A549 (cell line): ENCODE measurements at regions of chr17 and their contacts with region 1.

Region 1: DNA sequence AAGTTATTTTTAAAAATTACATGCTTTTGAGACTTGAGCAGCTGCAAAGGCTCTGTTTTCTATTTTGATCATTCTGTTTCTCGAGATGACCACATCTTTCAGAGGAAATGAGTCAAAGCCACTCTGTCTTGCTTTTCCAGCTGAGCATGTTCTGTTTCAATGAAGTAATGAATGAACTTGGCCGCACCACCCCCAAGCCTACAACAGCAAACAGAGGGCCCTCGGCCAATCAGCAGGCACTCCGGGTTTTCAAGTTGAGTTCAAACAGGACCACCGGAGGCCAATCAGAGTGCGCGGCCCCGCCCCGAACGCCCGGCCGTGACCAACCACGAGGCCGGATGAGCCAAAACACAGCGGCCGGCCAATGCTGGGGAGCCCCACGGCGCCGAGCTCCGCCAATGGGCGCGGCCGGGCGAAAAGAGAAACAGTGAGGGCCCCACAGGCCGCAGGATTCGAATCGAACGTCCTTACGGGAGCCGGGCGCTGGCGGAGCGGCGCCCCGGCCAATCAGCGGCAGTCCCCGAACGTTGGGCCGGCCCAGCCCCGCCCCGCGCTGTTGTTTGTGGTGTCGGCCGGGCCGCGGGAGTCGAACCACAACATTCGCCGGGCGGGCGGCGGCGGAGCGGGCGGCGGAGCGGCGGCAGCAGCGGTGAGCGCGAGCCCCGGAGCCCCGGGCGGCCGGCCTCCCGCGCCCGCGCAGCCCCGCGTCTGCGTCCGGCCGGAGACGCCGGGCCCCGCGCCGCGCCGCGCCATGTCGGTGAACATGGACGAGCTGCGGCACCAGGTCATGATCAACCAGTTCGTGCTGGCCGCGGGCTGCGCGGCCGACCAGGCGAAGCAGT is at the start of gene UBALD2:
- DNase-seq: peak; percentile 100
- ATAC-seq: peak; percentile 92 to 98
- H3K4me3 ChIP-seq: peak within 1 kb of the TSS; percentile 99
- H3K27ac ChIP-seq: peak within 1 kb of the TSS; percentile 89 to 92
- H3K4me1 ChIP-seq: peaks cover 25% of the 10 kb centered on the region
- CTCF ChIP-seq: no peak
- EP300 ChIP-seq: no peak
- POLR2A ChIP-seq: peak; percentile 21; the same call in 1 of the 2 replicates
- RAD21 ChIP-seq: no peak
- polyA plus RNA-seq, gene UBALD2: 13.8 and 21.5 TPM in 2 replicates

Region 2: DNA sequence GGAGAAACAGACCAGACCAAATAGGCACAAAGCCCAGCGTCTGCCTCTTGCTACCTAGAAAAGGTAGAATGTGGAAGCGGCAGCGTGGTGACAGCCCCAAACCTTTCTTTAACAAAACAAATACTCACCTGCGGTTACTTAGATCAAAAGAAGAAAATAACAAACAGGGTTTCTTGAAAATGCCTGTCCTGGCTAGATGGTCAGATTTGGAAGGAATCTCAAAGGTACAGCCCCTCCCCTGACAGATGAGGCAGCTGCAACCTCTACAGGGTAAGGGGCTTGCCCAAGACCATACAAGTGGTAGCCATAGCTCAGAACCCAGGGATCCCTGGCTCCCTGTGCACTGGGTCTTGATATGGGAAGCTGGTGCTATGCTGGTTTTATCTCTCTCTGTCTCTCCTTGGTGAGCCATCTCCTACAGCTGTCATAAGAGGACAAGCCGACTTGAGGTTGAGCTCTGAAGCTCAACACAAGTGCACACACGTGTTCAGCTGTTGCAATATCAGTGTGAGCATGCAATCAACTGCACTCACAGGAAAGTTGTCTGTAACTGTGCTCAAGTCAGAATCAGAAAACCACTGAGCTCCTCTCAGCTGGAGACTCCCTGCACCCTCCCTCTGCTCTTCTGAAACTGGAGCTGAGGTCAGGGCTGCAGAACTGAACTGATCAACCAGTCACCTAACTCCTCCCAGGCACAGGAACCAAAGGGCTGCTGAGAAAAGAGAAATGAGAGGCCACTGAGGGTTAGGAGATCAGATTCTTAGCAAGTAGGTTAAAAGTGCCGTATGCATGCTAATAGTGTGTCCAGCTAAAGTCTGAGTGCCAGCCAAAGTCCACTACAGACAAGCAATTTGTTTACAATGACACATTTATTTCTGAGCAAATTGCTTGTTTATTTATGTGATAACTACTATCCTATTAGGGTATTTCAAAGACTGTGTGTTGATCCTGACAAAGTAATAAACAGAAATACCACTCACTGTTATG is 18.6 kb before region 1 on chr17:
- CTCF ChIA-PET with region 1: interaction called, 9 read pairs
- POLR2A ChIA-PET with region 1: interaction called, 12 read pairs
- DNase-seq: no peak
- ATAC-seq: peak; percentile 34 to 62; a peak in 5 of 6 replicates
- H3K4me3 ChIP-seq: no peak overlapping the region
- H3K27ac ChIP-seq: no peak overlapping the region
- H3K4me1 ChIP-seq: peaks cover 6% of the 10 kb centered on the region
- CTCF ChIP-seq: no peak
- EP300 ChIP-seq: no peak
- POLR2A ChIP-seq: no peak
- RAD21 ChIP-seq: no peak

Region 3: DNA sequence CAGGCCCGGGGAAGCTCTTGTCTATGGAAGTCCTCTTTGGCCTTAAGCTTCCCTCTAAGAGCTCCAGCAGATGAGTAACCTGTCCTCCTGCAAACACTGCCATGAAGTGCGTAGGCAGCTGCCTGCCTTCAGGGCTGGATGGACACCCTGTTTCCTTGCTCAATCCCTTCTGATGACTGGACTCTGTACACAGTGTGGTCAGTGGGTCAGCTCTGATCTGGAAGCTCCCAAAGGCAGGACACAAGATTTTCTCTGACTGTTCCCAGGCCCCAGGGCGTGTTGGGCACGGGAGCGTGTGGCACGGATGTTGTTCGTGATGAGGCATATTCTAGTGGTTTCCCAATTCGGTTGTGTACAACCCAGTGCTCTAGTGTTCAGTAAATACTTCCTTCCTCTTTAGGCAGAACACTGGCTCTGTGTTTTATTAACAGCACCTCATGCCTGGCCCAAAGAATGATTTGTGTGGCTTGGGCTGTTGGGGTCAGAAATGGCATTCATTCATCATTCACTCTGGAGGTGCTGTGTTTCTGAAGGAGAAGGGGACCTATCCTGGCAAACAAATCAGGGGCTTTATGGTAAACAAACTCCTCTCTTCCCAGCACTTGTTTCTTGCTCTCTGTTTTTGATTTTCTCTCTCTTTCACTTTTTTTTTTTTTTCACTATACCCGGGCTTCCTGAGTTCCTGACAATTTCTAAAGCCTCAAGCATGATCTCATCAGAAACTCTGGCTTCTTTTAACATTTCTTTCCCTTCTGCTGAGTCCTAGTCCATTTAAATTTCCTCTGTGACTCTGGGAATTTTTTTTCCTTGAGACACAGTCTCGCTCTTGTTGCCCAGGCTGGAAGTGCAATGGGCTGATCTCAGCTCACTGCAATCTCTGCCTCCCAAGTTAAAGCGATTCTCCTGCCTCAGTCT is 12.7 kb before region 1 on chr17:
- CTCF ChIA-PET with region 1: interaction called, 10 read pairs
- POLR2A ChIA-PET with region 1: interaction called, 17 read pairs
- DNase-seq: peak in 1 of 2 experiments; percentile 88
- ATAC-seq: peak; percentile 94 to 97
- H3K4me3 ChIP-seq: no peak overlapping the region
- H3K27ac ChIP-seq: peak overlapping the region; percentile 60 to 70
- H3K4me1 ChIP-seq: peaks cover 21% of the 10 kb centered on the region
- CTCF ChIP-seq: no peak
- EP300 ChIP-seq: no peak
- POLR2A ChIP-seq: no peak
- RAD21 ChIP-seq: no peak

Region 4: GRCh38 chr17:76444518-76445311 is 179.7 kb after region 1 on chr17:
- CTCF ChIA-PET with region 1: no interaction called
- POLR2A ChIA-PET with region 1: no interaction called
- DNase-seq: no peak
- ATAC-seq: no peak
- H3K4me3 ChIP-seq: no peak overlapping the region
- H3K27ac ChIP-seq: peak overlapping the region; percentile 81 to 89
- H3K4me1 ChIP-seq: peaks cover 71% of the 10 kb centered on the region
- CTCF ChIP-seq: no peak
- EP300 ChIP-seq: no peak
- POLR2A ChIP-seq: no peak
- RAD21 ChIP-seq: no peak